CD8-positive, alpha-beta T cell (primary cell): ENCODE measurements at regions of chr1 and their contacts with region 1.

Region 1: DNA sequence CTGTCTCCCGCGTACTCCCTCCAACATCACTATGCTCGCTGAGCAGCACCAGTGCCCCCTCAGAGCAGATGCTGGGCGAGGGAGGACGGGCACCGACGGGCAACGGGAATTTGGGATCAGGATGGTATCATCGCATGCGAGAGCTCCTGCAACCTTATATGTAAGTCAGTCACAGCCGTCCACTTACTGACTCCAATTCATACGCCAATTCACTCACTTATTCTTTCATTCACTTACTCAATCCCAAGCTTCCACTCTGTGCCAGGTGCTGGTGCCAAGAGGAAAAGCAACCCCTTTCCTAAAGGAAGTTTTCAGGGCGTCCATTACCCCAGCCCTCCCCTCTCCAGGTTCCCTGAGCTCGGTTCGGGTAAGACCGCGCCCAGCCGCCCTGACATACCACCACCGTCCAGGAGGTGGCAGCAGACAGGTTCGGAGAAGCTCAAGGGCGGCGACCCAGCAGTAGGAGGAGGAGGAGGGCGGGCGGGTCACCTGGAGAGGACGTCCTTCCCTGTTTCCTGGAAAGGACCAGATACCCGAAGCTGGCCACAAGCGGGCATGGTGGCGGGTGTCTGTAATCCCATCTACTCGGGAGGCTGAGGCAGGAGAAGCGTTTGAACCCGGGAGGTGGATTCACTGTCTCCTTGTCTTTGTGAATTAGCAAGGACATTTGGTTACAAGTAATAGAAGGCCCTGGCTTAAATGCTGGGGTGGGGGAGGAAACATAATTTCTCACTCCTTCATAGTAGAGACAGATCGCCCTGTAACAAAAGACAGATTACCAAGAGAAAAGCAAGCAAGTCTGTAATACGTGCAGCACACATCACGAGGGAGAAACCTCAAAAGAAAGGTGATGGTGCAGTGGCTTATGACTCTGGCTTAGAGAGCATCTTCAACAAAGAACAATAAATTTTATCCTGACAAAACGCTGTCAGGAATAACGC is 7.6 kb upstream of the IL22RA1 start:
- DNase-seq: peak; percentile 75 to 91 (median 87)
- ATAC-seq: peak; percentile 98
- H3K4me3 ChIP-seq: peak overlapping the region; percentile 29 to 38
- H3K4me3 Mint-ChIP-seq: peak overlapping the region; percentile 77
- H3K27ac ChIP-seq: no peak overlapping the region
- H3K27ac Mint-ChIP-seq: no peak overlapping the region
- H3K4me1 ChIP-seq: peaks cover 6% of the 10 kb centered on the region
- H3K4me1 Mint-ChIP-seq: peaks cover 11% of the 10 kb centered on the region
- H3K27me3 ChIP-seq: peaks cover 5 to 10% of the 10 kb centered on the region in 2 experiments
- H3K27me3 Mint-ChIP-seq: peaks cover 30% of the 10 kb centered on the region
- CTCF ChIP-seq: peak; percentile 88

Region 2: GRCh38 chr1:23282957-23283356 is 867.5 kb before region 1 on chr1:
- CTCF ChIA-PET with region 1: no interaction called
- POLR2A ChIA-PET with region 1: no interaction called
- intact Hi-C with region 1: no loop called
- DNase-seq: peak in 1 of 9 experiments; percentile 8
- ATAC-seq: no peak
- H3K4me3 ChIP-seq: no peak overlapping the region
- H3K4me3 Mint-ChIP-seq: no peak overlapping the region
- H3K27ac ChIP-seq: no peak overlapping the region
- H3K27ac Mint-ChIP-seq: no peak overlapping the region
- H3K4me1 ChIP-seq: no peaks in the 10 kb centered on the region
- H3K4me1 Mint-ChIP-seq: no peaks in the 10 kb centered on the region
- H3K27me3 ChIP-seq: no peaks in the 10 kb centered on the region
- H3K27me3 Mint-ChIP-seq: no peaks in the 10 kb centered on the region
- CTCF ChIP-seq: no peak

Region 3: GRCh38 chr1:24138476-24139221 is 11.9 kb before region 1 on chr1:
- CTCF ChIA-PET with region 1: interaction called, 10 read pairs
- POLR2A ChIA-PET with region 1: no interaction called
- intact Hi-C with region 1: no loop called
- DNase-seq: peak in 1 of 9 experiments; percentile 19
- ATAC-seq: no peak
- H3K4me3 ChIP-seq: no peak overlapping the region
- H3K4me3 Mint-ChIP-seq: no peak overlapping the region
- H3K27ac ChIP-seq: no peak overlapping the region
- H3K27ac Mint-ChIP-seq: no peak overlapping the region
- H3K4me1 ChIP-seq: no peaks in the 10 kb centered on the region
- H3K4me1 Mint-ChIP-seq: peaks cover 2% of the 10 kb centered on the region
- H3K27me3 ChIP-seq: no peaks in the 10 kb centered on the region
- H3K27me3 Mint-ChIP-seq: peaks cover 15% of the 10 kb centered on the region
- CTCF ChIP-seq: no peak

Region 4: GRCh38 chr1:24164004-24164403 is 13.5 kb after region 1 on chr1:
- CTCF ChIA-PET with region 1: interaction called, 14 read pairs
- POLR2A ChIA-PET with region 1: no interaction called
- intact Hi-C with region 1: no loop called
- DNase-seq: no peak
- ATAC-seq: no peak
- H3K4me3 ChIP-seq: no peak overlapping the region
- H3K4me3 Mint-ChIP-seq: no peak overlapping the region
- H3K27ac ChIP-seq: no peak overlapping the region
- H3K27ac Mint-ChIP-seq: no peak overlapping the region
- H3K4me1 ChIP-seq: no peaks in the 10 kb centered on the region
- H3K4me1 Mint-ChIP-seq: no peaks in the 10 kb centered on the region
- H3K27me3 ChIP-seq: no peaks in the 10 kb centered on the region
- H3K27me3 Mint-ChIP-seq: no peaks in the 10 kb centered on the region
- CTCF ChIP-seq: no peak

Region 5: GRCh38 chr1:24186993-24187805 is 36.7 kb after region 1 on chr1 and contains the start of gene IFNLR1:
- CTCF ChIA-PET with region 1: interaction called, 12 read pairs
- POLR2A ChIA-PET with region 1: no interaction called
- intact Hi-C with region 1: no loop called
- DNase-seq: peak; percentile 22 to 91 (median 73)
- ATAC-seq: peak; percentile 85
- H3K4me3 ChIP-seq: peak within 1 kb of the TSS; percentile 51 to 81
- H3K4me3 Mint-ChIP-seq: peak within 1 kb of the TSS; percentile 85
- H3K27ac ChIP-seq: peak within 1 kb of the TSS; percentile 32 to 56
- H3K27ac Mint-ChIP-seq: peak within 1 kb of the TSS; percentile 80
- H3K4me1 ChIP-seq: peaks cover 29% of the 10 kb centered on the region
- H3K4me1 Mint-ChIP-seq: peaks cover 56% of the 10 kb centered on the region
- H3K27me3 ChIP-seq: no peaks in the 10 kb centered on the region
- H3K27me3 Mint-ChIP-seq: no peaks in the 10 kb centered on the region
- CTCF ChIP-seq: no peak
- total RNA-seq, gene IFNLR1: 4.1 to 5.6 TPM

Region 6: DNA sequence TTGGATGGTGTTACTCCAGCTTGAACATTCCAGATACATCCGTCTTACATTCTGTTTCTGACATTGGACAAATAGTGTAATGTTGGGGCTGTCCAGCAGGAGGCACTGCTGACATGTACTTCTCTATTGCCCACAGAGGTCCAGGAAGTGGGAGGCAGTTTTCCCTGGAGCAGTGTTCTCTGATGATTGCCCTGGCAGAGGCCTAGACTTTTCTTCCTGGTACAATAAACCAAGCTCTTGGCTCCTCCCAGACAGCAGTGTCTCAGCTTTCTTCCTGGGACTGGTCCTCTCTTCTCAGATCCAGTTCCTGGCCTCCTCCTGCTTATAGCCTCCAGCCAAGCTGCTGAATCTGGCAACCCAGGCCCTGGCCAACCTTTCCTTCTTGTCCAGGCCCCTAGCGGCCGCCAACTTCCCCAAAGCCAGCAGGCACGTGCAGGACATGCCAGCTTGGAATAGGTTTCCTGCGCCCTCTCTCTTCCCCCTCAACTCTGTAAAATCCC is 51.5 kb after region 1 on chr1:
- CTCF ChIA-PET with region 1: interaction called, 13 read pairs
- POLR2A ChIA-PET with region 1: no interaction called
- intact Hi-C with region 1: loop called in 1 of 2 experiments (anchors 1 kb)
- DNase-seq: peak; percentile 26 to 72 (median 59)
- ATAC-seq: no peak
- H3K4me3 ChIP-seq: no peak overlapping the region
- H3K4me3 Mint-ChIP-seq: no peak overlapping the region
- H3K27ac ChIP-seq: no peak overlapping the region
- H3K27ac Mint-ChIP-seq: no peak overlapping the region
- H3K4me1 ChIP-seq: peaks cover 4% of the 10 kb centered on the region
- H3K4me1 Mint-ChIP-seq: peaks cover 8% of the 10 kb centered on the region
- H3K27me3 ChIP-seq: no peaks in the 10 kb centered on the region
- H3K27me3 Mint-ChIP-seq: peaks cover 2% of the 10 kb centered on the region
- CTCF ChIP-seq: peak; percentile 80

Region 7: GRCh38 chr1:24224086-24224485 is 73.6 kb after region 1 on chr1:
- CTCF ChIA-PET with region 1: no interaction called
- POLR2A ChIA-PET with region 1: no interaction called
- intact Hi-C with region 1: no loop called
- DNase-seq: no peak
- ATAC-seq: no peak
- H3K4me3 ChIP-seq: no peak overlapping the region
- H3K4me3 Mint-ChIP-seq: no peak overlapping the region
- H3K27ac ChIP-seq: no peak overlapping the region
- H3K27ac Mint-ChIP-seq: no peak overlapping the region
- H3K4me1 ChIP-seq: no peaks in the 10 kb centered on the region
- H3K4me1 Mint-ChIP-seq: no peaks in the 10 kb centered on the region
- H3K27me3 ChIP-seq: no peaks in the 10 kb centered on the region
- H3K27me3 Mint-ChIP-seq: peaks cover 18% of the 10 kb centered on the region
- CTCF ChIP-seq: no peak

Region 8: DNA sequence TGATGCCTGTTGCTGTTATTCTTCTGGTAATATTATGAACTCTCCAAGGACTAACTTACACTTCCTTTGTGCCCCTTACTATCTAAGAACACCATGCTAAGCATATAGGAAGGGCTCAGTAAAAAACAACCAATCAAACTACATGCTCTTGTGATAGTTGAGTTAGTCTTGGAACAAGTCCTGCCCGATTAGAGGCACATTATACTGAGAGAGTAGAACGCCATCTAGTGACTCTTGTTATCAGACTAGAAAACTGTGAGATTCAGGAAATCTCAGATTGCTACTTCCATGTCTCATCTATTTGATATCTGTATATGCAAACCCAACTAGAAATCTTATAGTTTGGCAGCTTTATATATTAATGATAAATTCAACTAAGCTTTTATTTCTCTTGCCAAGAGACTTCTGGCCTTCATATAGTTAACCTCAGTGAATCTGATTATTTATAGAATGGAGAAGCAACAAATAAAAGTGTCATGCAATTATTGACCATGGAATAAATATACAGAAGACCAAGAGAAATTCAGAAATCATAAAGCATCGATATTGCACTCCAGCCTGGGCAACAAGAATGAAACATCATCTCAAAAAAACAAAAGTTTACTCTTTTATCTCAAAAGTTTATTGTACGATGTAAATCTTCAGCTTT is 484.8 kb after region 1 on chr1:
- CTCF ChIA-PET with region 1: interaction called, 3 read pairs
- POLR2A ChIA-PET with region 1: no interaction called
- intact Hi-C with region 1: loop called in 1 of 2 experiments (anchors 1 kb)
- DNase-seq: peak in 2 of 9 experiments; percentile 63 to 75
- ATAC-seq: peak; percentile 93
- H3K4me3 ChIP-seq: no peak overlapping the region
- H3K4me3 Mint-ChIP-seq: no peak overlapping the region
- H3K27ac ChIP-seq: no peak overlapping the region
- H3K27ac Mint-ChIP-seq: no peak overlapping the region
- H3K4me1 ChIP-seq: no peaks in the 10 kb centered on the region
- H3K4me1 Mint-ChIP-seq: peaks cover 2% of the 10 kb centered on the region
- H3K27me3 ChIP-seq: peaks cover 0 to 3% of the 10 kb centered on the region in 2 experiments
- H3K27me3 Mint-ChIP-seq: peaks cover 4% of the 10 kb centered on the region
- CTCF ChIP-seq: peak; percentile 57

Region 9: GRCh38 chr1:24830680-24831272 is 680.3 kb after region 1 on chr1:
- CTCF ChIA-PET with region 1: interaction called, 4 read pairs
- POLR2A ChIA-PET with region 1: no interaction called
- intact Hi-C with region 1: loop called (anchors 2 kb)
- DNase-seq: peak in 2 of 9 experiments; percentile 68 to 74
- ATAC-seq: peak; percentile 52
- H3K4me3 ChIP-seq: no peak overlapping the region
- H3K4me3 Mint-ChIP-seq: no peak overlapping the region
- H3K27ac ChIP-seq: no peak overlapping the region
- H3K27ac Mint-ChIP-seq: no peak overlapping the region
- H3K4me1 ChIP-seq: no peaks in the 10 kb centered on the region
- H3K4me1 Mint-ChIP-seq: no peaks in the 10 kb centered on the region
- H3K27me3 ChIP-seq: peaks cover 0 to 3% of the 10 kb centered on the region in 2 experiments
- H3K27me3 Mint-ChIP-seq: peaks cover 13% of the 10 kb centered on the region
- CTCF ChIP-seq: peak; percentile 95

Region 10: DNA sequence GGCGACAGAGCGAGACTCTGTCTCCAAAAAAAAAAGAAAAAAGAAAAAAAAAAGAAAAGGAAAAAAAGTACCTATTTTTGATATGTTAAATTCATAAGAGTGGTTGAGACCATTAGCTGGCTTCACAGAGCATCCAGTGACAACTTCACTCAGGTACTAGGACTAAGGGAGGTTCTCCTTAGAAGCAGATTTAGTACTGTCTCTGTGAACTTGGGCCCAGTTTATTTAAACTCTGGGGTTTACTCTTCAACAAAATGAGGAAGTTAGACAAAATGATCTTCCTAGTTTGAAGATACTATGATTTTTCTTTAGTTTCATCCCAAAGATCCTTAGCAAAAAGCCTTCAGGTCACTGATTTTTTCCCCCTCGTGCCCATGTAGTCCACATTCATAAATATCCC is 1301.4 kb after region 1 on chr1:
- CTCF ChIA-PET with region 1: no interaction called
- POLR2A ChIA-PET with region 1: no interaction called
- intact Hi-C with region 1: no loop called
- DNase-seq: no peak
- ATAC-seq: no peak
- H3K4me3 ChIP-seq: no peak overlapping the region
- H3K4me3 Mint-ChIP-seq: no peak overlapping the region
- H3K27ac ChIP-seq: no peak overlapping the region
- H3K27ac Mint-ChIP-seq: no peak overlapping the region
- H3K4me1 ChIP-seq: no peaks in the 10 kb centered on the region
- H3K4me1 Mint-ChIP-seq: peaks cover 9% of the 10 kb centered on the region
- H3K27me3 ChIP-seq: no peaks in the 10 kb centered on the region
- H3K27me3 Mint-ChIP-seq: no peaks in the 10 kb centered on the region
- CTCF ChIP-seq: no peak